Naive thymus-derived CD4-positive, alpha-beta T cell (primary cell): ENCODE measurements at regions of chr15 and their contacts with region 1.

Region 1: GRCh38 chr15:52780172-52780980 is 9.8 kb downstream of the ONECUT1 start:
- DNase-seq: peak in 7 of 9 donors; percentile 46 to 64 (median 59)
- ATAC-seq: peak; percentile 85
- H3K4me3 ChIP-seq: peak overlapping the region; percentile 9
- H3K4me3 Mint-ChIP-seq: peak overlapping the region in 9 of 10 donors; percentile 7 to 76 (median 46)
- H3K27ac ChIP-seq: no peak overlapping the region
- H3K27ac Mint-ChIP-seq: no peak overlapping the region
- H3K4me1 ChIP-seq: peaks cover 0 to 5% of the 10 kb centered on the region in 2 donors
- H3K4me1 Mint-ChIP-seq: peaks cover 6 to 27% (median 18%) of the 10 kb centered on the region in 7 donors
- H3K27me3 ChIP-seq: peaks cover 11 to 26% of the 10 kb centered on the region in 2 donors
- H3K27me3 Mint-ChIP-seq: peaks cover 74 to 88% (median 77%) of the 10 kb centered on the region in 5 donors

Region 2: DNA sequence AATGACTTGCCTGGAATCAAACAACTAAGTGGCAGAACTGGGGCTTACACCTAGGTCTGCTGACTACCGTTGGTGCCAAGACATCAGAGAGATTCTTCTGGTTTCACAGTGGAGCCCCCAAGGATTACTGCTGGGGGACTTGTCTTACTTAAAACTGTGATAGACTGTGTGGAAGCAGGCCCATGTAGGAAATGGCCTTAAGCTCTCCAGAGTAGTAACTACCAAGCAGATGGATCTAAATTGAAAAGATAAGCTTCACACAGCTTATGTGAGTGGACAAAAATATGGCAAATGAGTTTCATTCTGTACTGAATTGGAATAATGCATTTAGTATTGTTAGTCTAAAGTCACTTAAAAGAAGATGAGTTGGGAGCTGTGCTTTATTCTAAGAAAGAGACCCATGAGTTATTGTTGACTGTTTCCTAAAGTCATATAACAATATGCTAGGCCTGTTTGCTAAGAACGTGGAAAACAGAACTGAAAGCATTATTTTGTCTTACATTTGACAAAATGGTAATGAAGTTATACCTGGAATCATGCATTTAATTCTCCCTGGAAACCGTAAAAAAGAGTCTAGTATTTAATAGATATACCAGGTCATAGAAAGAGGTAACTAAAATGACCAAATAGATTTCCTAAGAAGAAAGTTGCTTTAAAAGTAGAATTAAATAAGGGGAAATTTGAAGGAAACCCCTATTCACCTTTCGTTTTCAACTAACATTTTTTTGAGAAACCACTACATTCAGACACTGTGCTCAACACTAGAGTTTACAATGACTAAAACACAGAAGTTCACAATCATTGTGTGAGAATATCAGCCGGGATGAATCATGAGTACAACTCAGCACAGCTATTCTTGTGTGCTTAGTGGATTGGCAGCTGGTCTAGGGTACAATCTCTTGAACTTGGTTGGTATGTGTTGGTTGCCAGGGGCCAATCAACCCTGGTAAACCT is 774.4 kb before region 1 on chr15:
- CTCF ChIA-PET with region 1: no interaction called
- POLR2A ChIA-PET with region 1: no interaction called
- intact Hi-C with region 1: no loop called
- DNase-seq: no peak
- ATAC-seq: no peak
- H3K4me3 ChIP-seq: no peak overlapping the region
- H3K4me3 Mint-ChIP-seq: peak overlapping the region in 1 of 10 donors; percentile 54
- H3K27ac ChIP-seq: no peak overlapping the region
- H3K27ac Mint-ChIP-seq: peak overlapping the region in 1 of 9 donors; percentile 82
- H3K4me1 ChIP-seq: peaks cover 0 to 9% of the 10 kb centered on the region in 2 donors
- H3K4me1 Mint-ChIP-seq: peaks cover 9 to 58% (median 16%) of the 10 kb centered on the region in 7 donors
- H3K27me3 ChIP-seq: no peaks in the 10 kb centered on the region
- H3K27me3 Mint-ChIP-seq: peaks cover 0 to 2% (median 0%) of the 10 kb centered on the region in 5 donors

Region 3: GRCh38 chr15:52699457-52699856 is 80.9 kb before region 1 on chr15:
- CTCF ChIA-PET with region 1: no interaction called
- POLR2A ChIA-PET with region 1: no interaction called
- intact Hi-C with region 1: no loop called
- DNase-seq: no peak
- ATAC-seq: no peak
- H3K4me3 ChIP-seq: no peak overlapping the region
- H3K4me3 Mint-ChIP-seq: no peak overlapping the region
- H3K27ac ChIP-seq: no peak overlapping the region
- H3K27ac Mint-ChIP-seq: no peak overlapping the region
- H3K4me1 ChIP-seq: no peaks in the 10 kb centered on the region
- H3K4me1 Mint-ChIP-seq: no peaks in the 10 kb centered on the region
- H3K27me3 ChIP-seq: no peaks in the 10 kb centered on the region
- H3K27me3 Mint-ChIP-seq: peaks cover 0 to 43% (median 4%) of the 10 kb centered on the region in 5 donors

Region 4: DNA sequence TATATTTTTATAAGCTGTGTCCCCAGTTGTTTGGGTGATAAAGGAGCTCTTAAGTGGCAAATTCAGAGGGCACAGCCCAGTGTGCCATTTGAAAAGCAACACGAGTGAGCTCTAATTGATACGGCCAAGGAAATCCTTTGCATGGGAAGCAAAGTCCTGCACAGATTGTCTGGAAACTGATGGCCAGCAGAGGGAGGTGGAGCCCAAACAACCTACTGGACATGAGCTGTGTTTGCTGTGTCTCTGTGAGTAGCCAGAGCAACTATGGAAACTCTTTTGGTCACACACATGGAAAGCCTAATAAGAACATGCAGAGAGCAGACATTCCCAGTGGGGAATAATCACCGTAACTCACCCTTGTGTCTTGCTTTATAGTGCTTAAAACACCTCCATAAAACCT is 14.6 kb before region 1 on chr15:
- CTCF ChIA-PET with region 1: no interaction called
- POLR2A ChIA-PET with region 1: no interaction called
- intact Hi-C with region 1: no loop called
- DNase-seq: no peak
- ATAC-seq: no peak
- H3K4me3 ChIP-seq: no peak overlapping the region
- H3K4me3 Mint-ChIP-seq: no peak overlapping the region
- H3K27ac ChIP-seq: no peak overlapping the region
- H3K27ac Mint-ChIP-seq: no peak overlapping the region
- H3K4me1 ChIP-seq: no peaks in the 10 kb centered on the region
- H3K4me1 Mint-ChIP-seq: no peaks in the 10 kb centered on the region
- H3K27me3 ChIP-seq: no peaks in the 10 kb centered on the region
- H3K27me3 Mint-ChIP-seq: peaks cover 36 to 45% (median 43%) of the 10 kb centered on the region in 5 donors

Region 5: DNA sequence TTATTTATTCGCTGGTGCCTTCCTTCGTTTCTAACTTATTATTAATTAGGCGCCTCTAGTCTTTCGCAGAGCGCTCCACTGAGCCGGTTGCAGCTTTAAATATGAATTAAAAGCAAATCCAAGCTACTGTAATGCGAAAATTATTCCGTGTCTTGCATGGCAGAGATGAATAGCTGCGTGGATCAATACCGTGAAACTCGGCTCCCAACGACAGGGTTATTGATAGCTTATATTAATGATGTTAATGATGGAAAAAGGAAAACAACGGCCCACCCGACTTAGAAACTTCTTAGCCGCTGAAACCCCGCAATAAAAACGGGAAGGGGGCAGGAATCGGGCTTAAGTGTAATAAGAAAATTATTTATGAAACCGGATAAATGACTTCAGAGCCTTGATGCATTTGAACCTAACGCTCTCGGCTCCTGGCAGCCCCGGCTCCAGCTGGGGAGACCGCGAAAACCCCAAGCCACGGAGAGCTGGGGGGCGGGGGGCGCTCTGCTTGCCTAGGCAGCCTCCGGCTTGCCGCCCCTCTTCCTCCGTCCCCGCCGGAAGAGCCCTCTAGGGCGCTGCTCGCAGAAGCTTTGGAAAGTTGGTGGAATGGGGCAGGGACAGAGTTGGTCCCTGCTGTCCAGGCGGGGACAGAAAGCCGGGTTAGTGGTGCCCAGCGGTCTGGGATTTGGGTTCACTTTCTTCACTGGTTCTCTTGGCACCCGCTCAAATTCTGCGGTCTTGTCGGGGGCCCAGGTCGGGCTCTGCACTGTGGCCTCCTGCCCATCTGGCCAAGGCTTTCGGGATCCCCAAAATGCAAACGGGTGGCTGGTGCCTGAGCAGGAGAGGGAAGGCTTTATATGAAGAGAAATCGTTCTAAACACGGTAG is 17.5 kb after region 1 on chr15:
- CTCF ChIA-PET with region 1: interaction called, 3 read pairs
- POLR2A ChIA-PET with region 1: no interaction called
- intact Hi-C with region 1: loop called in 1 of 2 experiments (anchors 2 kb)
- DNase-seq: no peak
- ATAC-seq: no peak
- H3K4me3 ChIP-seq: no peak overlapping the region
- H3K4me3 Mint-ChIP-seq: peak overlapping the region in 3 of 10 donors; percentile 37 to 56 (median 45)
- H3K27ac ChIP-seq: no peak overlapping the region
- H3K27ac Mint-ChIP-seq: peak overlapping the region in 1 of 9 donors; percentile 71
- H3K4me1 ChIP-seq: peaks cover 0 to 10% of the 10 kb centered on the region in 2 donors
- H3K4me1 Mint-ChIP-seq: peaks cover 7 to 47% (median 22%) of the 10 kb centered on the region in 7 donors
- H3K27me3 ChIP-seq: peaks cover 17 to 36% of the 10 kb centered on the region in 2 donors
- H3K27me3 Mint-ChIP-seq: peaks cover 83 to 97% (median 89%) of the 10 kb centered on the region in 5 donors

Region 6: GRCh38 chr15:53197426-53197839 is 417.1 kb after region 1 on chr15:
- CTCF ChIA-PET with region 1: no interaction called
- POLR2A ChIA-PET with region 1: no interaction called
- intact Hi-C with region 1: loop called in 1 of 2 experiments (anchors 2 kb)
- DNase-seq: peak in 2 of 9 donors; percentile 2 to 56
- ATAC-seq: no peak
- H3K4me3 ChIP-seq: no peak overlapping the region
- H3K4me3 Mint-ChIP-seq: no peak overlapping the region
- H3K27ac ChIP-seq: no peak overlapping the region
- H3K27ac Mint-ChIP-seq: no peak overlapping the region
- H3K4me1 ChIP-seq: no peaks in the 10 kb centered on the region
- H3K4me1 Mint-ChIP-seq: peaks cover 0 to 7% (median 0%) of the 10 kb centered on the region in 7 donors
- H3K27me3 ChIP-seq: peaks cover 0 to 4% of the 10 kb centered on the region in 2 donors
- H3K27me3 Mint-ChIP-seq: peaks cover 8 to 45% (median 32%) of the 10 kb centered on the region in 5 donors

Region 7: DNA sequence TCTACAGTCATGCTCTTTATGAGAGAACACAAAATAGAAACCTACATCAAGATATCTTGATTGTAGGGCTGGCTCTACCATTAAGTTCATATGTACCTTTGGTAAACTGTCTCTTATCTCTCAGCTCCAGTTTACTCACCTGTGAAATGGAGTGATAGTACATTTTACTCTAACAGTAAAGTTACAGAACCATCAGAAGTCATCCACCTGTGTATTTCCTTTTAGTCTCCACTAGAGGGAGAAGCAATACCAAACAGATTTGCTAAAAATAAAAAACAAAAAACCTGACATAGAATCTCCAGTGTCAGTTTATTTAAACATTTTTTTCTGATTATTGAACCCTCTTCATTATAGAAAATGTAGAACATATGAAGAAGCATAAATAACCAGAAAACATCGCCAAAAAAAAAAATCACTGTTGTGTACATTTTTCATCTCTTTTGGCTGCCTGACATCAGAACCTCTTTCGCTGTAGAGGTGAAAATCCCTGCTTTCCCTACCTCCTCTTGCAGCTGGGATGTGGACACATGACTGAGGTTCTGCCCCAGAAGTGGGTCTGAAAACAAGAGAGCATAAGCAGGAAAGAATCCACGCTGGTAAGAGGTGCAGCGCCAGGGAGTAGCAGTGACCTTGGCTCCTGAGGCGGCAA is 1027.8 kb after region 1 on chr15:
- CTCF ChIA-PET with region 1: no interaction called
- POLR2A ChIA-PET with region 1: no interaction called
- intact Hi-C with region 1: loop called in 1 of 2 experiments (anchors 5 kb)
- DNase-seq: no peak
- ATAC-seq: no peak
- H3K4me3 ChIP-seq: no peak overlapping the region
- H3K4me3 Mint-ChIP-seq: no peak overlapping the region
- H3K27ac ChIP-seq: no peak overlapping the region
- H3K27ac Mint-ChIP-seq: no peak overlapping the region
- H3K4me1 ChIP-seq: no peaks in the 10 kb centered on the region
- H3K4me1 Mint-ChIP-seq: peaks cover 0 to 5% (median 0%) of the 10 kb centered on the region in 7 donors
- H3K27me3 ChIP-seq: no peaks in the 10 kb centered on the region
- H3K27me3 Mint-ChIP-seq: peaks cover 0 to 16% (median 6%) of the 10 kb centered on the region in 5 donors